ENCODE measurements at regions of chr10 and their contacts with region 1.

Region 1: GRCh38 chr10:97903128-97904017 is 53.7 kb downstream of the GOLGA7B start:
- DNase-seq: no peak
- ATAC-seq: peak; percentile 49
- H3K4me3 ChIP-seq: no peak overlapping the region
- H3K27ac ChIP-seq: no peak overlapping the region
- H3K4me1 ChIP-seq: no peaks in the 10 kb centered on the region; the same call in 1 of the 2 replicates
- H3K27me3 ChIP-seq: peaks cover 5% of the 10 kb centered on the region
- CTCF ChIP-seq: no peak

Region 2: GRCh38 chr10:97601268-97602215 is 301.8 kb before region 1 on chr10:
- CTCF ChIA-PET with region 1: no interaction called
- POLR2A ChIA-PET with region 1: no interaction called
- in situ Hi-C with region 1: no loop called
- intact Hi-C with region 1: no loop called
- DNase-seq: no peak
- ATAC-seq: peak; percentile 37; the same call in 1 of the 2 replicates
- H3K4me3 ChIP-seq: no peak overlapping the region
- H3K27ac ChIP-seq: no peak overlapping the region
- H3K4me1 ChIP-seq: peaks cover 7% of the 10 kb centered on the region; the same call in 1 of the 2 replicates
- H3K27me3 ChIP-seq: no peaks in the 10 kb centered on the region
- CTCF ChIP-seq: no peak

Region 3: DNA sequence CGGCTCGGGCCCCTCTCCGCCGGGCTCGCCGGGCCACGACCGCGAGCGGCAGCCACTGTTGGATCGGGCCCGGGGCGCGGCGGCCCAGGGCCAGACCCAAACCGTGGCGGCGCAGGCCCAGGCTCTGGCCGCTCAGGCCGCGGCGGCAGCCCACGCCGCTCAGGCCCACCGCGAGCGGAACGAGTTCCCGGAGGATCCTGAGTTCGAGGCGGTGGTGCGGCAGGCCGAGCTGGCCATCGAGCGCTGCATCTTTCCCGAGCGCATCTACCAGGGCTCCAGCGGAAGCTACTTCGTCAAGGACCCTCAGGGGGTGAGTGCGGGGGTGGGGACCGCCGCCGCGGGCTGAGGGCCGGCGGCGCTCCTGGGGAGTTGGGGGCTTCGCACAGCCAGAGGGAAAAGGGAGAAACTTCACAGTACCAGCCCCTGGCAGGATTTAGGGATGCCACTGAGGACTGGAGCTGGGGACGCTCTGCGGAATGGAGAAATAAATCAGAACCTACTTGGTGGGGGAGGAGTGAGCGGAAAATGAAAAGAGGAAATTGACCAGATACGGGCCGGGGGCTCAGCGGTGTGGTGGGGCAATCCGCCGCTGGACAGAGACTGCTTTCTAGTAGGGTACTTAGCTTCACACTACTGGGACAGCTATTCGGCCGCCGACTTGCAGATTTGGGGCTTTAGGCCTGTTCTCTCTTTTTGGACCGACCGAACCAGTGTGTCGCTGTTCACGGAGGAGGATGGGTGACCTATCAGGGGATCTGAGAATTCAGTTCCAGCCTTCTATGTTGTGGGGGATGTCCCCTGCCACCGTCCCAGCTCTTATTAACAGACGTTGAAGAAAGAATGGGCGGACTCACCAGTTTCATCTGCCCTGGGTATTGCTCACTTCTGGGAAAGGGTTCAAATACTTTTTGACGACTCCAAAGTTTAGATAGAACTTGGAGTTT is 262.2 kb before region 1 on chr10:
- CTCF ChIA-PET with region 1: no interaction called
- POLR2A ChIA-PET with region 1: interaction called, 10 read pairs
- in situ Hi-C with region 1: no loop called
- intact Hi-C with region 1: no loop called
- DNase-seq: no peak
- ATAC-seq: peak; percentile 57
- H3K4me3 ChIP-seq: peak overlapping the region; percentile 68 to 81
- H3K27ac ChIP-seq: peak overlapping the region; percentile 74
- H3K4me1 ChIP-seq: peaks cover 9% of the 10 kb centered on the region; the same call in 1 of the 2 replicates
- H3K27me3 ChIP-seq: no peaks in the 10 kb centered on the region
- CTCF ChIP-seq: no peak

Region 4: DNA sequence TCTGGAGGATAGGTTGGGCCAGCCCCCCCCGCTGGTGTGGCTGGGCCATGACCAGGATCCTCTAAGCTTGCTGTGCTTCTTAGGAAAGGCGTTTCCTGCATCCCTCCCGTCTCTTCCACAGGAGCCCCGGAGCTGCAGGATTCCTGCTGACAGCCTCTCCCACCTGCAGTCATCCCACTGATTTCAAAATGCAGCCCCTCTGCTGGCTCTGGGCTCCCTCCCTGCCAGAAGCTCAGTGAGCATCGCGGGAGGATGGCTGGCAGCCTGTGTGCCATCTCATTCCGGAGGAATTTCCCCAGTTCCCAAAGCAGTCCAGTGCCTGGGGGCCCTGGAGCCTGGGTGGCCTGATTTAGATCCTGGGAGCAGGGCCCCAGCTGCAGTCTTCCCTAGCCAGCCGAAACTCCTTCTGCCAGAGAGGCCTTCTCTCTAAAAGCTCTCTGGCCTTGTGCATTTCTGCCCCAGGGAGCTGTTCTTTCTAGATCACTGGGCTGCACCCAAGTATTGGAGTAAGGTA is 75.5 kb before region 1 on chr10:
- CTCF ChIA-PET with region 1: interaction called, 11 read pairs
- POLR2A ChIA-PET with region 1: no interaction called
- in situ Hi-C with region 1: no loop called
- intact Hi-C with region 1: no loop called
- DNase-seq: no peak
- ATAC-seq: peak; percentile 66
- H3K4me3 ChIP-seq: no peak overlapping the region
- H3K27ac ChIP-seq: no peak overlapping the region
- H3K4me1 ChIP-seq: no peaks in the 10 kb centered on the region; the same call in 1 of the 2 replicates
- H3K27me3 ChIP-seq: no peaks in the 10 kb centered on the region; the same call in 1 of the 2 replicates
- CTCF ChIP-seq: no peak

Measured in Panc1 (cell line).